CD8-positive, alpha-beta T cell (primary cell): ENCODE measurements at regions of chr7 and their contacts with region 1.

Region 1: GRCh38 chr7:149460493-149461277 is at the start of gene ZNF777:
- DNase-seq: peak; percentile 66 to 90 (median 81)
- ATAC-seq: peak; percentile 97
- H3K4me3 ChIP-seq: peak within 1 kb of the TSS; percentile 69 to 74
- H3K4me3 Mint-ChIP-seq: peak within 1 kb of the TSS; percentile 88
- H3K27ac ChIP-seq: peak within 1 kb of the TSS; percentile 55 to 69
- H3K27ac Mint-ChIP-seq: peak within 1 kb of the TSS; percentile 72
- H3K4me1 ChIP-seq: peaks cover 24% of the 10 kb centered on the region
- H3K4me1 Mint-ChIP-seq: peaks cover 33% of the 10 kb centered on the region
- H3K27me3 ChIP-seq: no peaks in the 10 kb centered on the region
- H3K27me3 Mint-ChIP-seq: peaks cover 10% of the 10 kb centered on the region
- CTCF ChIP-seq: peak; percentile 57
- total RNA-seq, gene ZNF777: 21.0 to 22.2 TPM

Region 2: GRCh38 chr7:149334930-149335329 is 125.8 kb before region 1 on chr7:
- CTCF ChIA-PET with region 1: no interaction called
- POLR2A ChIA-PET with region 1: no interaction called
- intact Hi-C with region 1: no loop called
- DNase-seq: no peak
- ATAC-seq: no peak
- H3K4me3 ChIP-seq: no peak overlapping the region
- H3K4me3 Mint-ChIP-seq: no peak overlapping the region
- H3K27ac ChIP-seq: no peak overlapping the region
- H3K27ac Mint-ChIP-seq: no peak overlapping the region
- H3K4me1 ChIP-seq: no peaks in the 10 kb centered on the region
- H3K4me1 Mint-ChIP-seq: no peaks in the 10 kb centered on the region
- H3K27me3 ChIP-seq: peaks cover under 1 to 2% of the 10 kb centered on the region in 2 experiments
- H3K27me3 Mint-ChIP-seq: peaks cover 11% of the 10 kb centered on the region
- CTCF ChIP-seq: no peak

Region 3: GRCh38 chr7:149422129-149422913 is 38.4 kb before region 1 on chr7:
- CTCF ChIA-PET with region 1: interaction called, 6 read pairs
- POLR2A ChIA-PET with region 1: interaction called, 11 read pairs
- intact Hi-C with region 1: loop called (anchors 1 kb)
- DNase-seq: peak; percentile 50 to 91 (median 66)
- ATAC-seq: peak; percentile 97
- H3K4me3 ChIP-seq: peak overlapping the region; percentile 71 to 76
- H3K4me3 Mint-ChIP-seq: peak overlapping the region; percentile 76
- H3K27ac ChIP-seq: peak overlapping the region; percentile 60 to 82
- H3K27ac Mint-ChIP-seq: peak overlapping the region; percentile 75
- H3K4me1 ChIP-seq: peaks cover 5% of the 10 kb centered on the region
- H3K4me1 Mint-ChIP-seq: peaks cover 12% of the 10 kb centered on the region
- H3K27me3 ChIP-seq: no peaks in the 10 kb centered on the region
- H3K27me3 Mint-ChIP-seq: no peaks in the 10 kb centered on the region
- CTCF ChIP-seq: no peak

Region 4: GRCh38 chr7:149489391-149490024 is 28.8 kb after region 1 on chr7:
- CTCF ChIA-PET with region 1: no interaction called
- POLR2A ChIA-PET with region 1: no interaction called
- intact Hi-C with region 1: no loop called
- DNase-seq: peak in 2 of 9 experiments; percentile 18 to 21
- ATAC-seq: peak; percentile 51
- H3K4me3 ChIP-seq: no peak overlapping the region
- H3K4me3 Mint-ChIP-seq: no peak overlapping the region
- H3K27ac ChIP-seq: no peak overlapping the region
- H3K27ac Mint-ChIP-seq: peak overlapping the region; percentile 20
- H3K4me1 ChIP-seq: no peaks in the 10 kb centered on the region
- H3K4me1 Mint-ChIP-seq: peaks cover 8% of the 10 kb centered on the region
- H3K27me3 ChIP-seq: no peaks in the 10 kb centered on the region
- H3K27me3 Mint-ChIP-seq: no peaks in the 10 kb centered on the region
- CTCF ChIP-seq: no peak